ENCODE measurements at regions of chr1 and their contacts with region 1.

Region 1: DNA sequence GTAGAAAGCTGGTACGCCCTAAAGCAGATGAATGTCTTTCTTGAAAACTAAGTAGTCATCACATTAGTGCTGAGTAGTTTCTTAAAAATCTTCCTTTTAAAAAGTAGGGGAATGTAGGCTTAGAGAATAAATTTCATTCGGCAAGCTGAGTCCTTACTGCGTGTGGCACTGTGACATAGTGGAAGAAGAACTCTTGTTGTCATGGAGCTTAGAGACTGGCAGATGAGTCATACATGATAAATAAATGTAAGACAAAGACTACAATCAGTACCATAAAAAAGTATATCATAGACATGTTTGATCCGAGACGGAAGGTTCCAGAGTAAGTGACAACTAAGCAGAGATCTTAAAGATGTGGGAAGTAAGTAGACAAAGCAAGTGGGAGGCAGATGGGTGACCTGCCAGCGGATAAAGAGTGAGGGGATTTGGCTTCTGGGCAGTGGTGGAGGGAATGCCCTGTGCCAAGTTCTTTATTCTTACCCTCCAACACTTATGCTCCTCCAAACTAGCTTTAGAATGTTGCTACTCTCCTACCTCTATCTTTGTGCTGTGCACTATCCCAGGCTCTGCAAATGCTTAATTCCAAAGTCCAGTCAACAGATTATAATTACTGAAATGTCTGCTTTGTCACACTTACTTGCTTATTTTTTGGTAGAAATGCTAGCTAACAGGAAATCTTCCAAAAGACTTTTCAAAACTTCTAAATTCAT is 608.5 kb upstream of the USP24 start:
- DNase-seq: no peak
- H3K4me3 ChIP-seq: no peak overlapping the region
- CTCF ChIP-seq: no peak

Region 2: DNA sequence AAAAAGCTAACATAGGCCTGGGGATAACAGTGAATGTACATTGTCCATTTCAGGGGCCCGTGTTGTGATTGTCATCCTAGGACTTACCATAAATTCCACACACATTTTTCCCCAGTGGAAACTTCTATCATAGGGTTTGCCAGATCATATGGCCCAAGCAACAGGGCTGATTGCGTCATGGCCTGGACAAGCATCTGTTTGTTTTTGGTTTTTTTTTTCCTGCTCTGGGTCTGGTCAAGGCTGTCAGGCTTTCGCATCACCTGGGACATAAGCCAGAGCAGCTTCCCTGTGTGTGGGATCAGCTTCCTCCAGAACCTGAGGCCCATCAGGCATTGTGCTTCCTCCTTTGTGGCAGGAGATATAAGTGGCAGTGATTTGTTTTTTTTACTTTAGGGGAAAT is 10.1 kb before region 1 on chr1:
- CTCF ChIA-PET with region 1: interaction called, 15 read pairs
- POLR2A ChIA-PET with region 1: no interaction called
- DNase-seq: no peak
- H3K4me3 ChIP-seq: no peak overlapping the region
- CTCF ChIP-seq: no peak

Measured in AG04449 (cell line).